ENCODE measurements at regions of chr17 and their contacts with region 1.

Region 1: DNA sequence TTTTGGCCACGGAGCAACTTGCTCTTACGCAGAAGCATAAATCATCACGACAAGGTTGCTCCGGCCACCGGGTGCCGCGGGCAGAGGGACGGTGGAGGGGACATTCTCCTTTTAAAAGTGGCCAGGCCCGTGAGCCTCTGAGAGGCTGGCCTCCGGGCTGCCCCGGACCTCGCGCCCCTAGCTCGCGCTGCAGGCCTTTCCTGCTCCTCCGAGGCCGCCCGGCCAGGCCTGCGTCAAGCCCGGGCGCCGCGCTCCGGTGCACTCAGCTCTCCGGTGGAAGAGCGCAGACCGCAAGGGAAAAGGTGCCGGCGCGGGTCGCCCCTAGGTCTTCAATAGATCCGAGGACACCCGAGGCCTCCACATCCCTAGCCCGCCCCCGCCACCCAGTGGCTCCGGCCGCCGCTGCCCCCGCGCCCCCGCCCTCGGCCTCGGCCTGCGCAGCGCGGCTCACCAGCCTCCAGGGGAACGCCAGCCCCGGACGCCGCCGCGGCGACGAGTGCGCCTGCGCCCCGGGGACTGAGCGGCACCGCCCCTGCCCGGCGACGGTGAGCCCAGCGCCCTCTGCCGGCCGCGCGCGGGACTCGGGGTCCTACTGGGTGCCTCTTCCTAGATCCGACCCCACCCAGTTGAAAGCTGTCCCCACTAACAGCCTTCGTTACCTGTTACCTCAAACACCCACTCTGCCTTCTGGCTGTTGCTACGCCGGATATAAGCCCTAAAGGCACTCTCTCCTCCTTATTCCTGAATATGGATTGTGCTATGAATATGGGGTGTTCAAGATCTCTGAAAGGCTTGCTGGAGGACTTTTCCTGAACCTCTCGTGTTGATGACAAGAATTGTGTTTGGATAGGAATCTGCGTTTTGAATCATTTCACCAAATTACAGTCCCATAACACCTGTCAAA is at the start of gene LYRM9:
- DNase-seq: peak; percentile 81
- H3K4me3 Mint-ChIP-seq: peak within 1 kb of the TSS; percentile 70
- H3K27ac Mint-ChIP-seq: peak within 1 kb of the TSS; percentile 32
- H3K4me1 Mint-ChIP-seq: peaks cover 5% of the 10 kb centered on the region
- H3K27me3 Mint-ChIP-seq: peaks cover 28% of the 10 kb centered on the region
- CTCF ChIP-seq: peak; percentile 87
- total RNA-seq, gene LYRM9: 6.4 and 7.4 TPM in 2 replicates

Region 2: DNA sequence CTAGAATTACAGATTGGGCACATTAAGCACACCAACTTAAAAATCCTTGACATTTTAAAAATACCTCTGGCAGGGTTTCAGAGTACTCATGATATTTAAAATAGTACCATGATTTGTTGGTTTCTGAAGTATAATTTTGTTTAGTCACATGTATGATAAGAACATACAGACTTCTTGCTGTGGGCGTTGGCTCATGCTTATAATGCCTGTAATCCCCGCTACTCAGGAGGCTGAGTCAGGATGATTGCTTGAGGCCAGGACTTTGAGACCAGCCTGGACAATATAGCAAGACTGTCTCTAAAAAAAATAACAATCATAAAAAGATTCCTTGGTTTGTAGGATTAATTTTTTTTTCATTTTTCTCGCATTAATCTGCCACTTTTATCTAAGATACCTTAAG is 171.3 kb before region 1 on chr17:
- CTCF ChIA-PET with region 1: no interaction called
- POLR2A ChIA-PET with region 1: no interaction called
- intact Hi-C with region 1: no loop called
- DNase-seq: no peak
- H3K4me3 Mint-ChIP-seq: no peak overlapping the region
- H3K27ac Mint-ChIP-seq: no peak overlapping the region
- H3K4me1 Mint-ChIP-seq: no peaks in the 10 kb centered on the region
- H3K27me3 Mint-ChIP-seq: peaks cover 12% of the 10 kb centered on the region
- CTCF ChIP-seq: no peak

Region 3: GRCh38 chr17:27879987-27880608 is 13.0 kb before region 1 on chr17:
- CTCF ChIA-PET with region 1: interaction called, 62 read pairs
- POLR2A ChIA-PET with region 1: interaction called, 3 read pairs
- intact Hi-C with region 1: no loop called
- DNase-seq: peak; percentile 77
- H3K4me3 Mint-ChIP-seq: no peak overlapping the region
- H3K27ac Mint-ChIP-seq: no peak overlapping the region
- H3K4me1 Mint-ChIP-seq: no peaks in the 10 kb centered on the region
- H3K27me3 Mint-ChIP-seq: no peaks in the 10 kb centered on the region
- CTCF ChIP-seq: peak; percentile 89

Region 4: DNA sequence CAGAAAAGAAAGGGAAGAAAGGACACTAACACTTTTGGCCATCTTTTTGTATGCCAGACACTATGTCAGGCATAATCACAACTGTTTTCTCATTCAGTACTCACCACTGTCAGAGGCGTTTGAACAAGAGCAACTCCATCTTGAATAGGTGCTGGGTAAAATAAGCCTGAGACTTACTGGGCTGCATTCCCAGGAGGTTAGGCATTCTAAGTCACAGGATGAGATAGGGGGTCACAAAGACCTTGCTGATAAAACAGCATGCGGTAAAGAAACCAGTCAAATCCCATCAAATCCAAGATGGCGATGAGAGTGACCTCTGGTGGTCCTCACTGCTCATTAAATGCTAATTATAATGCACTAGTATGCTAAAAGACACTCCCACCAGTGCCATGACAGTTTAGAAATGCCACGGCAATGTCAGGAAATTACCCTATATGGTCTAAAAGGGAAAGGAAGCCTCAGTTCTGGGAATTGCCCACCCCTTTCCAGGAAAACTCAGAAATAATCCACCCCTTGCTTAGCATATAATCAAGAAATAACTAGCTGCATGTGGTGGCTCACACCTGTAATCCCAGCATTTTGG is 14.9 kb after region 1 on chr17:
- CTCF ChIA-PET with region 1: interaction called, 11 read pairs
- POLR2A ChIA-PET with region 1: no interaction called
- intact Hi-C with region 1: no loop called
- DNase-seq: no peak
- H3K4me3 Mint-ChIP-seq: no peak overlapping the region
- H3K27ac Mint-ChIP-seq: no peak overlapping the region
- H3K4me1 Mint-ChIP-seq: no peaks in the 10 kb centered on the region
- H3K27me3 Mint-ChIP-seq: peaks cover 22% of the 10 kb centered on the region
- CTCF ChIP-seq: no peak

Region 5: DNA sequence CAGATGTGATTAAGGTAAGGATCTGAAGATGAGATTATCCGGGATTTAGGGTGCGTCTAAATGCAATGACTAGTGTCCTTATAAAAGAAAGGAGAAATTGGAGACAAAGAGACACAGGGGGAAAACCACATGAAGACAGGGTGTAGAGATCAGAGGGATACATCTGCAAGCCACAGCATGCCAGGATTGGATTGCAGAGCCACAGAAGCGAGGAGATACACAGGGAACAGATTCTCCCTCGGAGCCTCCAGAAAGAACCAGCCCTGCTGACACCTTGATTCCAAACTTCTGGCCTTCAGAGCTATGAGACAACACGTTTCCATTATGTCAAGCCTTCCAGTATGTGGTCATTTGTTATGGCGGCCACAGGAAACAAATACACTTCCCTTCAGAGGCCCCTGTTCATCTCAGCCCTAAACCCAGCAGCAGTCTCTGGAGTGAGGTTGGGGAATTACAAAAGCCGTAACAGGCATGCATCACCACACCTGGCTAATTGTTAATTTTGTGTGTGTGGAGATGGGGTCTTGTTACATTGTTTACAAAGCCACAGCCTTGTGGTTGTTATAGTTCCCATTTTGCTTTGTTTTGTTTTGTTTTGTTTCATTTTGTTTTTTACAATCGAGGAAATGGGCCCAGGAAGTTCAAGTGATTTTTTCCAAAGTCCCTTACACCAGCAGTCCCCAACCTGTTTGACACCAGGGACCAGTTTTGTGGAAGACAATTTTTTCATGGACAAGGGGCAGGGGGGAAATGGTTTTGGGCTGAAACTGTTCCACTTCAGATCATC is 51.6 kb after region 1 on chr17:
- CTCF ChIA-PET with region 1: no interaction called
- POLR2A ChIA-PET with region 1: no interaction called
- intact Hi-C with region 1: no loop called
- DNase-seq: no peak
- H3K4me3 Mint-ChIP-seq: no peak overlapping the region
- H3K27ac Mint-ChIP-seq: no peak overlapping the region
- H3K4me1 Mint-ChIP-seq: no peaks in the 10 kb centered on the region
- H3K27me3 Mint-ChIP-seq: no peaks in the 10 kb centered on the region
- CTCF ChIP-seq: no peak

Region 6: DNA sequence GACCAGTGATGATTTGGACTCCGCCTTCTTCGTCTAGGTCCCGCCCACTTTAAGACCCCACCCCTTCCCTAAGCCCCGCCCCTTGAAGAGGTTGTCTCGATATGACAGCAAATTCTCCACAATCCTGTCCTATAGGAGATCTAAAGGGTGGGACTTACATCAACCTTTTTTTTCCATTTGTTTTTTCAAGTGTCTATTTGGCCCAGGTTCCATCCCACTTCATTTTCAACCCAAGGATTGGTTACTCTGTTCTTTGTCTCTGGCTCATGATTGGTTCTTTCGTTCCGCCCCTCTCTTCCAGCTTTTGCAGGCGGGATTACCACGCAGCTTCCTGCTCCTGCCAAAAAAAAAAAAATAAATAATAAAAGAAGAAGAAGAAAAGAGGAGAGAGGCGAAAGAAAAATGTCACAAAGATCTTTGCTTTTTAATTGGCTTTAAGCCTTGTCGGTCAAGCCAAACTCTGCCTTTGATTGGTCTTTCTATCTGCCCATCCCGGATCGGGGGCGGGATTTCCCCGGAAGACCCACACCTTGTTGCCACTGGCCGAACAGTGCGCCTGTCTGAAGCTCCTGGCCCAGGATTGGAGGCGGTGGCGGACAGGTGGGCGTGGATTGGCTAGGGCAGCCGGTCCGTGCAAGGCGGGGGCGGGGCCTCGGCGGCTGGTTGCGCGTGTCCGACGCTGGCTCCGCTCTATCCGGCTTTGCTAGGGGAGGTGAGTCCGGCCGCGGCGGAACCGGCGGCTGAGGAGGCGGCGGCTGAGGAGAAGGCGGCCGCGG is 148.1 kb after region 1 on chr17:
- CTCF ChIA-PET with region 1: interaction called, 3 read pairs
- POLR2A ChIA-PET with region 1: no interaction called
- intact Hi-C with region 1: loop called (anchors 2 kb)
- DNase-seq: peak; percentile 99
- H3K4me3 Mint-ChIP-seq: peak overlapping the region; percentile 91
- H3K27ac Mint-ChIP-seq: peak overlapping the region; percentile 81
- H3K4me1 Mint-ChIP-seq: peaks cover 47% of the 10 kb centered on the region
- H3K27me3 Mint-ChIP-seq: no peaks in the 10 kb centered on the region
- CTCF ChIP-seq: no peak

Region 7: GRCh38 chr17:28346746-28347246 is 453.7 kb after region 1 on chr17:
- CTCF ChIA-PET with region 1: no interaction called
- POLR2A ChIA-PET with region 1: no interaction called
- intact Hi-C with region 1: no loop called
- DNase-seq: no peak
- H3K4me3 Mint-ChIP-seq: no peak overlapping the region
- H3K27ac Mint-ChIP-seq: peak overlapping the region; percentile 59
- H3K4me1 Mint-ChIP-seq: peaks cover 12% of the 10 kb centered on the region
- H3K27me3 Mint-ChIP-seq: no peaks in the 10 kb centered on the region
- CTCF ChIP-seq: no peak